Thyroid gland (tissue), 4 donors: ENCODE measurements at regions of chr4 and their contacts with region 1.

Region 1: DNA sequence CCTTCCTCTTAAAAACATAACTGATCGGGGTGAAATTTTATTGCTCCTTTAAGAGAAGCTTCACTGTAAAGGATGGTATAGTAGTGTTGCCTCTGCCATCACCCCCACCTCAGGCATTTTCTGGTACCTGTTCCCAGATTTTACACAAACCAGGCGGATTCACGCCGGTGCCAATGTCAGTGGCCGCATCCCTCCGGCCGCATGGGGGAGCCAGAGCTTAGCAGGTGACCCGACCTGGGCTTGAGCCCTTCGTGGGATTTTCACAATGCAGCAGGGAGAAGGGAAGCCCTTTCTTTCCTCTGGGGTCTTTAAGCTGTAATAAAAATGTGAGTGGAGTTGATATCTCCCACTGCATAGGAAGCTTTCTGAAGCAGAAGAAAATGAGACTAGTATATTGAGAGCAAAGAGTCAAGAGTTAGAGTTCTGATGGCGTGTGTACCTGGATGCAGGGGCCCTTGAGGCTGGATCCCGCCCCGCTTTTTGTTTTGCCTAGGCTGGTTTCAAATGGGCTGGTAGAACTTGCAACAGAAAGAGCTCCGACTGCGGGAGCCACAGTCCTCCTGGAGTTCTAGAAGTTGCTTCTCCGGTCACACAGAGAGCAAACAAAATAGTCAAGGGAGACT is 59.4 kb downstream of the POLR2B start:
- DNase-seq: peak; percentile 70 to 83
- H3K4me3 ChIP-seq: no peak overlapping the region
- H3K27ac ChIP-seq: no peak overlapping the region
- H3K4me1 ChIP-seq: peaks cover 0 to 19% of the 10 kb centered on the region in 2 donors
- H3K27me3 ChIP-seq: no peaks in the 10 kb centered on the region
- CTCF ChIP-seq: peak; percentile 56 to 88 (median 78)
- POLR2A ChIP-seq: no peak

Region 2: GRCh38 chr4:57110640-57111511 is 72.8 kb after region 1 on chr4:
- intact Hi-C with region 1: loop called (anchors 5 kb)
- DNase-seq: peak; percentile 68 to 72
- H3K4me3 ChIP-seq: peak overlapping the region; percentile 45 to 80 (median 76)
- H3K27ac ChIP-seq: peak overlapping the region; percentile 92 to 98 (median 96)
- H3K4me1 ChIP-seq: peaks cover 12 to 16% of the 10 kb centered on the region in 2 donors
- H3K27me3 ChIP-seq: no peaks in the 10 kb centered on the region
- CTCF ChIP-seq: no peak
- POLR2A ChIP-seq: peak in 1 of 2 donors; percentile 24

Region 3: DNA sequence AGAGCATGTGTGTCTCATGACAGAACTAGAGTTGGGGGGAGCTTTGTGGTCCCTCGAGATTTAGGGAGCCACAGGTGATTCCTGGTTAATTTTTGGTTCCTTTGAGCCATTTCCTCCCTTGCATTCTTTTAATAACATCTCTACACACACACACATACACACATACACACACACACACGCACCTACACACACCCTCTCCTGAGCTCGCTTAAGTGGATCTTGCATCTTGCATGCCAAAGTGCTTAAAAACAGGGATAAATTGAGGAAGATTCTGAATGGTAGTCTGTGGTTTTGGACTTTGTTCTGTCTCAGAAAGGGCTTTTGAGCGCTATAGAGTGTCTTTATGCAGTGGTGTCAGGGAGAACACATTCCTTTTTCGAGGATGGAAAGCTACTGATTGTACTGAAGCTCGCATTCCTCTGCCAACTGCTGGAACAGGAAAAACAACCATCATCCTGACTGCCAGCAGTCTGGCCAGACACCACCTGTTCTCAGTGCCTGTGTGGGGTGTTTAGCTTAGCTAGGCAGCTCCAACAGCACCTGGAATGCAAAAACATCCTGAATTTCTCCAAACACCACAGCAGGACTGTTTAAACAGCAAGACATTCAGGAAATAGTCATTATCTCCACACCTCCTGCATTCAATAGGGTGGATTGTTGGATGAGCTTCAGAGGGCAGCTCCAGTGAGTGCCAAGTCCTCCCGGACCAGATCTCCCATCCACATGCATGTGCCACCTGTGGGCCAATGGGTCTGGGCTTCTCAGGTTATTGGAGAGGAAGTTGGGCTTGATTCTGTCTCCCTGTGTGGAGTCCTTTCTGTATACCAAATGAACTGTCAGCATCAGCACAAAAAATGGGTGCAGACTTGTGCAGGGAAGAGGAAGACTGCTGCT is 94.0 kb after region 1 on chr4:
- intact Hi-C with region 1: no loop called
- DNase-seq: peak; percentile 80 to 88
- H3K4me3 ChIP-seq: no peak overlapping the region
- H3K27ac ChIP-seq: peak overlapping the region; percentile 76 to 81 (median 77)
- H3K4me1 ChIP-seq: peaks cover 13 to 19% of the 10 kb centered on the region in 2 donors
- H3K27me3 ChIP-seq: no peaks in the 10 kb centered on the region
- CTCF ChIP-seq: no peak
- POLR2A ChIP-seq: peak in 1 of 2 donors; percentile 33

Region 4: GRCh38 chr4:57426779-57427395 is 388.8 kb after region 1 on chr4:
- intact Hi-C with region 1: loop called (anchors 10 kb)
- DNase-seq: peak; percentile 69 to 81
- H3K4me3 ChIP-seq: no peak overlapping the region
- H3K27ac ChIP-seq: no peak overlapping the region
- H3K4me1 ChIP-seq: no peaks in the 10 kb centered on the region
- H3K27me3 ChIP-seq: no peaks in the 10 kb centered on the region
- CTCF ChIP-seq: peak in 5 of 6 experiments; percentile 13 to 88 (median 67)
- POLR2A ChIP-seq: no peak